A673 (cell line): ENCODE measurements at regions of chrX and their contacts with region 1.

Region 1: DNA sequence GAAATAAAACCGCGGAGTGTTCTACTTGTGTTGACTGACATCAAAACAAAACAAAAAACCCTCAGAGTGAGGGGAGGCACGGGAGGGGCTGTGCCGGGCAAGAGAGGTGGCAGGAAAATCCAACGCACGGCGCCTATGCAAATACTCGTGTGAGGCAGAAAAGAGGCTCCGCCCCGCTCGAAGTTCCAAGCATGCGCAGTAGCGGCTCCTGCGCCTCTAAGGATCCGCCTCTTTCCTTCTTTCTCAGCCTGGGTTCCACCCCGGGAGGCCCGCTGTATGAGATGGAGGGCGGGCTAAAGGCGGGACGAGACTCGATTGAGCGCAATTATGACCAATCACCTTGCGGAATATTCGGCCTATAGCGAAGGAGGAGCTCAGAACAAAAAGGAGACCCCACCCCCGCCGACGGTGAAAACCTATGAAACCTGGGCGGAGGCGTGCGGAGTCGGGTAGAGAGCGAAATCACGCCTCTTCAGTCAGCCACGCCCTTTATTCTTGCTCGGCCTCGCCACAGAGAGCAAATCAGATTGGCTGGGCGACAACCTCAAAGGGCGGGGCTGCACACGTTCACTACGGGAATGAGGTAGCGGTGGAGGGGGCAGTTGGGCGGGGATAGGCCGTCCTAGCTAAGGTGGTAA is 720 bp upstream of the CDK16 start:
- DNase-seq: peak; percentile 100
- H3K4me3 ChIP-seq: peak overlapping the region; percentile 100
- H3K27ac ChIP-seq: peak overlapping the region; percentile 99
- H3K4me1 ChIP-seq: peaks cover 14% of the 10 kb centered on the region
- H3K27me3 ChIP-seq: no peaks in the 10 kb centered on the region
- CTCF ChIP-seq: no peak

Region 2: DNA sequence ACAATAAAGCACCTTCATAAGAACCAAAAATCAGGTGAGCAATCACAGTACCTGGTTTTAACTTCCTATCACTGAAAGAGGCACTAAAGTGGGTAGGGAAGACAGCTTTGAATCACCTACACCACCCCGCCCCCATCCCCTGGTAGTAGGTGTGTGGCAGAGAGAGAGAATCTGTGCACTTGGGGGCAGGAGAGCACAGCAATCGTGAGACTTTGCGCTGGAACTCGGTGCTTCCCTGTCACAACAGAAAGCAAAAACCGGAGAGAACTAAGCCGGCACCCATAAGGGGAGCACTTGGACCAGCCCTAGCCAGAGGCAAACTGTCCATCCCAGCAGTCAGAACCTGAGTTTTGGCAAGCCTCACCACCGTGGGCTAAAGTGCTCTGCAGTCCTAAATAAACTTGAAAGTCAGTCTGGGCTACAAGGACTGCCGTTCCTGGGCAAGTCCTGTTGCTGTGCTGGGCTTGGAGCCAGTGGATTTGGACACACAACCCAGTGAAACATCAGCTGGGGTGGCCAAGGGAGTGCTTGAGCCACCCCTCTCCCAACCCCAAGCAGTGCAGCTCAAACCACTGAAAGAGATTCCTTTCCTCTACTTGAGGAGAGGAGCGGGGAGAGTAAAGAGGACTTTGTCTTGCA is 105.3 kb before region 1 on chrX:
- CTCF ChIA-PET with region 1: no interaction called
- POLR2A ChIA-PET with region 1: no interaction called
- intact Hi-C with region 1: no loop called
- DNase-seq: no peak
- H3K4me3 ChIP-seq: no peak overlapping the region
- H3K27ac ChIP-seq: no peak overlapping the region
- H3K4me1 ChIP-seq: no peaks in the 10 kb centered on the region
- H3K27me3 ChIP-seq: no peaks in the 10 kb centered on the region
- CTCF ChIP-seq: no peak

Region 3: GRCh38 chrX:47233337-47234113 is 15.8 kb after region 1 on chrX:
- CTCF ChIA-PET with region 1: no interaction called
- POLR2A ChIA-PET with region 1: interaction called, 4 read pairs
- intact Hi-C with region 1: loop called (anchors 1 kb)
- DNase-seq: peak; percentile 95
- H3K4me3 ChIP-seq: peak overlapping the region; percentile 73
- H3K27ac ChIP-seq: peak overlapping the region; percentile 98
- H3K4me1 ChIP-seq: no peaks in the 10 kb centered on the region
- H3K27me3 ChIP-seq: no peaks in the 10 kb centered on the region
- CTCF ChIP-seq: no peak

Region 4: DNA sequence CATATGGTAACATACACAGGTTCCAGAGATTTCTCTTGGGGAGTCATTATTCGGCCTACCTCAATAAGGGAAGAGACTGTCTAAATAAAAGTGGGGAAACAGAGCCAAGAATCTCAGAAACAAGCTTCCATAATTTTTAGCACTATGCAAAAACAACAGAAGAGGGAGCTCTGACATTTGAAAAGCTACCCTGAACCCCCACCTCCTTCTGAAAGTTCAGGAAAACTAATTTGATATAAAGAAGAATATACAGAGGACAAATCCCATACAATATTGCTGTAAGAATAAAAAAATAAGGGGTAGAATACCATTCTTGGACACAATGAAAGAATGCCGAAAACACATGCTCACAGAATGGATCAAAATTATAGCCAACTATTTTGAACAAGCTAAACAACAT is 279.5 kb after region 1 on chrX:
- CTCF ChIA-PET with region 1: no interaction called
- POLR2A ChIA-PET with region 1: no interaction called
- intact Hi-C with region 1: no loop called
- DNase-seq: peak; percentile 24
- H3K4me3 ChIP-seq: no peak overlapping the region
- H3K27ac ChIP-seq: no peak overlapping the region
- H3K4me1 ChIP-seq: peaks cover 13% of the 10 kb centered on the region
- H3K27me3 ChIP-seq: no peaks in the 10 kb centered on the region
- CTCF ChIP-seq: peak; percentile 65